ENCODE measurements at regions of chr10 and their contacts with region 1.

Region 1: GRCh38 chr10:61284222-61284890 is 168.8 kb downstream of the TMEM26 start:
- DNase-seq: no peak
- H3K4me3 Mint-ChIP-seq: no peak overlapping the region
- H3K27ac Mint-ChIP-seq: no peak overlapping the region
- H3K4me1 Mint-ChIP-seq: peaks cover 25% of the 10 kb centered on the region
- H3K27me3 Mint-ChIP-seq: peaks cover 15% of the 10 kb centered on the region

Region 2: DNA sequence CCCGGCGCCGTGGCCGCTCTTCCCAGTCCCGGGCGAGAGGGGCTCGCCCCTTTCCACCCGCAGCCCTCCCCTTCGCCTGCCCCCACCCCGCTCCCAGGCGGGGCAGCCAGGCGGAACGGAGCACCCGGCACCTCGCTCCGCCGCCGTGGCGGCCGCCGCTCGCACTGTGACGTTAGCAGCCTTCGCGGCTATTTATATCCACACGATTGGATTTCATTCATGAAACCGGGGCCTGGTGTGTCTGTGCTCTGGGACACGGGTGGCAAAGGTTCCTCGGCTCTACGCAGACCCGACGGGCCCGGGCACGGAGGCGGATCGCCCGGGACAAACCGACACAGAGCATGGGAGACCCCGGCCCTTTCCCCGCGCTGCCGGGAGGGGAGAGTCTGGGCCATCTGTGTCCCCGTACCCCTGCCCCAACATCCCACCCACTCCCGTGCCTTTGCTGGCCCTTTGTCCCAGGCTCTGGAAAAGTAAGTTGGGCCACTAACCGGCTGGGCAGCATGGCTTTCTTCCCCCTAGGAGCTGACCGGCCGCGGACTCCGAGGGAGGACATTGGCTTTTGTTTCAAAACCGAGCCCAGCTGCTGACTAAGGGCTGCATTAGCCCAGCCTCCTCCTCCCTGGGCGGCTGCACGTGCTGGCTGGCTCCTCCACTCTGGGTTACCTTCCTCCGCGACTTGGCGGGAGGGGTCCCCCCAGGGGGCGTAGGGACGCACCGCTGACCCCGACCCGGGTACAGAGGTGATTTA is 340.0 kb before region 1 on chr10 and contains the start of gene RHOBTB1:
- intact Hi-C with region 1: loop called (anchors 5 kb)
- DNase-seq: no peak
- H3K4me3 Mint-ChIP-seq: peak within 1 kb of the TSS; percentile 74
- H3K27ac Mint-ChIP-seq: peak within 1 kb of the TSS; percentile 77
- H3K4me1 Mint-ChIP-seq: peaks cover 9% of the 10 kb centered on the region
- H3K27me3 Mint-ChIP-seq: peaks cover 73% of the 10 kb centered on the region
- total RNA-seq, gene RHOBTB1: not detected in 2 replicates

Region 3: GRCh38 chr10:61140765-61141392 is 143.5 kb before region 1 on chr10:
- intact Hi-C with region 1: loop called (anchors 1 kb)
- DNase-seq: no peak
- H3K4me3 Mint-ChIP-seq: no peak overlapping the region
- H3K27ac Mint-ChIP-seq: no peak overlapping the region
- H3K4me1 Mint-ChIP-seq: no peaks in the 10 kb centered on the region
- H3K27me3 Mint-ChIP-seq: peaks cover 10% of the 10 kb centered on the region

Region 4: DNA sequence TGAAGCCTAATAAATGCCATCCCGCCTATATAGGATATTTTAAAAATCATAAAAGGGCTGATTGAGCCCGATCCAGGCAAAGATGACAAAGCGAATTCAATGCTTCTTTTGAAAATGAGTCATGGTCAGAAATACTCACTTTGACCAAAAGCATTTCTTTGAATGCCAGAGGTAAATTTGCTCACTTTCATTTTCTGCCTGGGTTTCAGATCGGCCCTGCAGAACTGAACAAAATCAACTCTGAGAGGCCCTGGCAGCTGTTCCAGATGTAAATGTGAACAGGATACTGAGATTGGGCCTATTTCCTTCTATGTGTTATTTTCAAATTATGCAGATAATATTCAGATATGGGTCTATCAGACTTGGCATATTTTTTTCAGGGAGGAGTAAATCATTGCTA is 502.4 kb after region 1 on chr10:
- intact Hi-C with region 1: loop called (anchors 5 kb)
- DNase-seq: no peak
- H3K4me3 Mint-ChIP-seq: no peak overlapping the region
- H3K27ac Mint-ChIP-seq: no peak overlapping the region
- H3K4me1 Mint-ChIP-seq: peaks cover 51% of the 10 kb centered on the region
- H3K27me3 Mint-ChIP-seq: no peaks in the 10 kb centered on the region

Measured in activated T-helper 1 cell treated with anti-CD3 and anti-CD28 coated beads, Interleukin-12 subunit alpha, Interleukin-12 subunit beta, Interleukin-2, Interleukin-4 antibody, amounts not matched to agents 30 ng/mL and 10 ng/mL and 1 ng/mL, durations not matched to agents 14 hours and 24 hours and 36 hours (primary cell).